HCT116 (cell line): ENCODE measurements at regions of chr6 and their contacts with region 1.

Region 1: DNA sequence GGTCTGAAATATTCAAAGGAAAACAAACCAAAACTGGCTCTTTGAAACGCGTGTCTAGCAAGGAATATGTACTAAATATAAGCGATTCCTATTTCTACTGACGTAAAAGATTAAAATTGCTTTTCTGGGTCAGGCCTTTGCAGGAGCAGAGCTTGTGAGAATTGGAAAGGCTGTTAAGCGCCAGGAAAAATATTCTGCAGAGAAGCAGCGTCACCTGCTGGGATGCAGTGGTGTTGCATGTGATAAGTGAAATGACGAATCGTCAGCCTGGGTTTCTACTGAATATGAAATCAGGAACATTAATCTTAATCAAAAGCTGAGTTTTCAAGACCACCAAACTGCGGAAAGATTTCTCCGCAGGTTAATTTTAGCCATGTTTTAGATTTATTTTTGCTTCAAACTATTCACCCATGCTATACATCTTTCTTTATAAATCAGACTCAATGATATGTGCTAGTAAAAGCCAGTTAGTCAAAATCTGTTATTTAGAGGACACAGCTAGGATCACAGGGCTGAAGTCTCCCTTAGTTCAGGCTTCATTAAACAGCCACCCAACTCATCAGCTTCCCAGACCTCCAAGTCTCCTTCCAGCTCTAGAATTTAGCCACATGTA is 67.4 kb downstream of the ALDH8A1 start:
- DNase-seq: peak; percentile 44
- ATAC-seq: peak; percentile 86
- H3K4me3 ChIP-seq: no peak overlapping the region
- H3K27ac ChIP-seq: no peak overlapping the region
- H3K4me1 ChIP-seq: 0 out of 4 replicates have a peak, but pooled peaks cover 0 to 3% of the 10 kb centered on the region in 2 experiments
- H3K27me3 ChIP-seq: no peaks in the 10 kb centered on the region
- CTCF ChIP-seq: peak; percentile 90 to 98 (median 92)
- POLR2A ChIP-seq: no peak
- RAD21 ChIP-seq: peak; percentile 94

Region 2: DNA sequence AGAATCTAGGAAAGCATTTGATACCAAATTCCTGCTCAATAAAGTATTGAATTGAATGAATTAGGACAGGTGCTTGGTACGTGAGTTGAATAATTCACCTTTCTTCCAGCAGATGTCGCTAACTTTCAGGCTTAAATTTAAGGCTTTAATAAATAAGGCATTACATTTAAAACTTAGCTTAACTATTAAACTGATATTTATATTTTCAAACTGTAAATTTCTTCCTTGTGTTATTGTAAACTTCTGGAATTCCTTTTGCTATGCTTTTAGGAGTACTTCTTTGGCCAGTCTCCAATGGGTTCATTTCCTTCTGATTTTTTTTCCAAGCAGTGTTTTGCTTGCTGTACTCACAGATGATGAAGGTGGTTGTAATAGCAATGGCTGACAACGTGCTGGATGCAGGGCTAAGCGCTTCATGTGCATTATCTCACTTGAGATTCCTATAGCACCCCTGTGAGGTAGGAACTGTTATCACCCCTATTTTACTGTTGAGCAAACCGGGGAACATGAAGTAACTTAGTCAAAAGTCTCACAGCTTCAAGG is 758.8 kb before region 1 on chr6:
- CTCF ChIA-PET with region 1: interaction called, 10 read pairs
- POLR2A ChIA-PET with region 1: no interaction called
- RAD21 ChIA-PET with region 1: no interaction called
- intact Hi-C with region 1: no loop called
- DNase-seq: peak; percentile 94
- ATAC-seq: peak; percentile 100
- H3K4me3 ChIP-seq: peak overlapping the region in 1 of 2 experiments; percentile 10; a peak in 1 of 4 replicates
- H3K27ac ChIP-seq: no peak overlapping the region
- H3K4me1 ChIP-seq: peaks cover 0 to 7% of the 10 kb centered on the region in 2 experiments; a peak in 1 of 4 replicates
- H3K27me3 ChIP-seq: no peaks in the 10 kb centered on the region
- CTCF ChIP-seq: peak; percentile 54 to 79 (median 66); a peak in 5 of 6 replicates
- POLR2A ChIP-seq: no peak
- RAD21 ChIP-seq: peak; percentile 35

Region 3: DNA sequence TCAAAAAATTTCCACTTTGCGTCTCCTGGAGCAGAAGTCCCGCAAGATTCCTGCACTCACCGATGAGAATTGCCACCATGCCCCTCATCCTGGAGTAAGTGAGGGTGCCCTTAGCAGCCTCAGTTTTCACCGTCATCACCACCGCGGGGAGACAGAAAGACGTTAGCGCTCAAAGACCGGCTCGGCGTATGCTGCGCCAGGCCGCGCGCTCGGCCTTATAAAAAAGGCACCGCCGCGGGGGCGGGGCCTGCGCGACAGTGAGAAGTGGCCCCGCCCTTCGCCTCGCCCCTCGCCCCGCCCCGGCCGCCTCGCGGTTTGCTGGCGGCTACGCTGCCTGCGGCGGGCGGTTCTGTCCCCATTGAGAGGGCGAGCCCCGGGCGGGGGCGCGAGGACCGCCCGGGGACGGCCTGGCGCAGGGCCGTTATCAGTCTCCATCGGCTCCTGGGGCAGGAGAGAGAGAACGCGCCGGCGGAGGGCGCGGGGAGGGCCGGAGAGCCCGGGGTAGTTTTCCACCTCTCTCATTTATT is 707.8 kb before region 1 on chr6:
- CTCF ChIA-PET with region 1: interaction called, 12 read pairs
- POLR2A ChIA-PET with region 1: interaction called, 5 read pairs
- RAD21 ChIA-PET with region 1: interaction called in 1 of 2 experiments, 7 read pairs
- intact Hi-C with region 1: loop called (anchors 1 kb)
- DNase-seq: peak; percentile 73
- ATAC-seq: peak; percentile 77
- H3K4me3 ChIP-seq: peak overlapping the region; percentile 62 to 69
- H3K27ac ChIP-seq: peak overlapping the region; percentile 63
- H3K4me1 ChIP-seq: peaks cover 8 to 21% of the 10 kb centered on the region in 2 experiments
- H3K27me3 ChIP-seq: no peaks in the 10 kb centered on the region
- CTCF ChIP-seq: no peak
- POLR2A ChIP-seq: peak; percentile 95
- RAD21 ChIP-seq: peak; percentile 40

Region 4: GRCh38 chr6:134822920-134823709 is 59.4 kb before region 1 on chr6:
- CTCF ChIA-PET with region 1: interaction called, 12 read pairs
- POLR2A ChIA-PET with region 1: no interaction called
- RAD21 ChIA-PET with region 1: interaction called in 1 of 2 experiments, 3 read pairs
- intact Hi-C with region 1: loop called (anchors 1 kb)
- DNase-seq: peak; percentile 86
- ATAC-seq: peak; percentile 99
- H3K4me3 ChIP-seq: no peak overlapping the region
- H3K27ac ChIP-seq: no peak overlapping the region
- H3K4me1 ChIP-seq: no peaks in the 10 kb centered on the region; a peak in 1 of 4 replicates
- H3K27me3 ChIP-seq: no peaks in the 10 kb centered on the region
- CTCF ChIP-seq: peak; percentile 83 to 97 (median 94)
- POLR2A ChIP-seq: no peak
- RAD21 ChIP-seq: peak; percentile 98